PC-9 (cell line): ENCODE measurements at regions of chr6 and their contacts with region 1.

Region 1: GRCh38 chr6:169738204-169738975 is 13.0 kb downstream of the DYNLT2 start:
- DNase-seq: no peak
- H3K4me3 ChIP-seq: no peak overlapping the region
- H3K27ac ChIP-seq: no peak overlapping the region
- H3K4me1 ChIP-seq: no peaks in the 10 kb centered on the region
- H3K27me3 ChIP-seq: no peaks in the 10 kb centered on the region; the same call in 1 of the 2 replicates
- CTCF ChIP-seq: no peak

Region 2: DNA sequence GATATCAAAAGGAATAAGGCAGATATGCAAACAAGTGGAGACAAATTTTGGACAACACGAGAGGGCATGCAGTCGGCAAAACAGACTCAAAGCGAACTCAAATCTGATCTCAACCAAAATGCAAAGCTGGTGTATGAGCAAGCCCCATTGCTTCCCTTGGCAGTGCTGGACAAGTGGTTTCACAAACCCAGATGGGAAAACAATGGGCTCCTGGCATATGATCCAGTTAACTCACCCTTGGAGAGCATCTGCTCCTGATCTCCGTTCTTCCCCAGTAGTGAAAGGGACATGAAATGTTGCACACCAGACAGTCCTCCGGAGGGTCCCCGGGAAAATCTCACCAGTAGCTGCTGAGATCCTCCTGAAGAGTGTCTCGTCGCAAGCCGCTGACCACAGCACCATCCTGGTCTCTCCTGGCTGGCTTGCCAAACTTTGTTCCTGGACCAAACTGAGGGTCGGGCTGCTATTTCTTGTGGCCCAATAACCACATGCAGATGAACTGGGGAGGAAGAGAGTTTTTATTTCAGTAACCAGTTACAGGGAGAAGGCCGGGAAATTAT is 400.4 kb before region 1 on chr6:
- CTCF ChIA-PET with region 1: interaction called, 12 read pairs
- POLR2A ChIA-PET with region 1: no interaction called
- intact Hi-C with region 1: no loop called
- DNase-seq: no peak
- H3K4me3 ChIP-seq: no peak overlapping the region
- H3K27ac ChIP-seq: no peak overlapping the region
- H3K4me1 ChIP-seq: no peaks in the 10 kb centered on the region
- H3K27me3 ChIP-seq: peaks cover 90% of the 10 kb centered on the region
- CTCF ChIP-seq: no peak

Region 3: GRCh38 chr6:169654598-169655391 is 83.6 kb before region 1 on chr6:
- CTCF ChIA-PET with region 1: no interaction called
- POLR2A ChIA-PET with region 1: no interaction called
- intact Hi-C with region 1: no loop called
- DNase-seq: no peak
- H3K4me3 ChIP-seq: no peak overlapping the region
- H3K27ac ChIP-seq: no peak overlapping the region
- H3K4me1 ChIP-seq: no peaks in the 10 kb centered on the region
- H3K27me3 ChIP-seq: no peaks in the 10 kb centered on the region
- CTCF ChIP-seq: no peak

Region 4: DNA sequence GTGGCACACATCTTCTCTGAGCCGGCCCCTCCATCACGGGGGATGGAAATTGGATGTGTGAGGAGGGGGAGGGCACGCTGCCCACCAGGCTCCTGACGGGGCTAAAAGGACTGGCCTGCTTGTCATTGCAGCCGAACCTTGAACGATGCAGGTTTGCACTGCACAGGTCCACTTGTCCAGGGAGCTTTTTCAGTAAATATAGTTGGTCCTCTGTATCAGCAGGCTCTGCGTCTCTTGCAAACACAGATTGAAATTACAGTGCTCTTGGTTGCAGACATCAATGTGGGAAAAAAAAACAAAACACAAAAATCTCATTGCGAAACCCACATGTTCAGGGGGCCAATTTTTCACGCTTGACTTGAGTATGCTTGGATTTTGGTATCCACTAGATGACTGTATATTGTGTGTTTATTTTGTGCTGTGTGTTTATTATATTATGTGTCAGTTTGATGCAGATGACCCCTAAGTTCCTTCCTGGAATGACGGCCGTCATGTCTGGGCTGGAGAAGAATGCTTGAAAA is 42.2 kb after region 1 on chr6:
- CTCF ChIA-PET with region 1: no interaction called
- POLR2A ChIA-PET with region 1: no interaction called
- intact Hi-C with region 1: no loop called
- DNase-seq: no peak
- H3K4me3 ChIP-seq: no peak overlapping the region
- H3K27ac ChIP-seq: no peak overlapping the region
- H3K4me1 ChIP-seq: no peaks in the 10 kb centered on the region
- H3K27me3 ChIP-seq: no peaks in the 10 kb centered on the region
- CTCF ChIP-seq: no peak